ENCODE measurements at regions of chr11 and their contacts with region 1.

Region 1: GRCh38 chr11:62905927-62906531 is 15.1 kb downstream of the CHRM1 start:
- H3K4me3 Mint-ChIP-seq: no peak overlapping the region
- H3K27ac Mint-ChIP-seq: no peak overlapping the region
- H3K4me1 Mint-ChIP-seq: peaks cover 35% of the 10 kb centered on the region
- H3K27me3 Mint-ChIP-seq: peaks cover 39% of the 10 kb centered on the region

Region 2: GRCh38 chr11:62948765-62949320 is 42.8 kb after region 1 on chr11:
- intact Hi-C with region 1: no loop called
- H3K4me3 Mint-ChIP-seq: no peak overlapping the region
- H3K27ac Mint-ChIP-seq: no peak overlapping the region
- H3K4me1 Mint-ChIP-seq: no peaks in the 10 kb centered on the region
- H3K27me3 Mint-ChIP-seq: peaks cover 21% of the 10 kb centered on the region

Region 3: DNA sequence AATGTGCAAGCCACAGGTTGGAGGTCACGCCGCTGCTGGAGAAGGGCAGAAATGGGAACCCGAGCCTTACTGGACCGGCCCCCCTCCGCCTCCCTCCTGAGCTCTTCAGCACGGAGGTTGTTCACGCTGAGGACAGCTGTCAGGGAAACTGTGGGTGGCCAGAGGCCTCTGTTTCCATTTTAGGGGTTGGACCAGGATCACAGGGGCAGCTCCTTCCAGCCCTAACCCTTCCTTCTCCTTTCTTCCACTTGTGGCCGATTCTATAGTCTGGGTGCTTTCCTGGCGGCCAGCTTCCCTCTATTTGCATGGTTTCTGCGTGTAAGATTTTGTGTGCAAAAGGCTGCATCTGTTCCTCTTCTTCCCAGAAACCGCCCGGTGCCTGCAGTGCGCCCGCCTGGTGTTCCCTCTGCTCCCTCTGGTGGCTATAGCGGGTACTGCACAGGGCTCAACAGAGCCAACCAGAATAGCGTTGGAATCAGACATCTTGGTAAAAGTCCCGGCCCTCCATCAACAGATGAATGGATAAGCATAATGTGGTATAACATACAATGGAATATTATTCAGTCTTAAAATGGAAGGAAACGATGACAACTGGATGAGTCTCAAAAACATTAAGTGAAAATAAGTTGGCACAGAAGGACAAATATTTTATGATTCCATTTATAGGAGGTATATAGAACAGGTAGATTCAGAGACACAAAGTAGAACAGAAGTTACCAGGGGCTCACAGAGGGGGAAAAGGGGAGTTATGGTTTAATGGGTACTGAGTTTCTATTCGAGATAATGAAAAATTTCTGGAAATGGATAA is 118.0 kb after region 1 on chr11:
- intact Hi-C with region 1: loop called (anchors 1 kb)
- H3K4me3 Mint-ChIP-seq: peak overlapping the region; percentile 64
- H3K27ac Mint-ChIP-seq: peak overlapping the region; percentile 71
- H3K4me1 Mint-ChIP-seq: peaks cover 13% of the 10 kb centered on the region
- H3K27me3 Mint-ChIP-seq: peaks cover 13% of the 10 kb centered on the region